ENCODE measurements at regions of chr12 and their contacts with region 1.

Region 1: DNA sequence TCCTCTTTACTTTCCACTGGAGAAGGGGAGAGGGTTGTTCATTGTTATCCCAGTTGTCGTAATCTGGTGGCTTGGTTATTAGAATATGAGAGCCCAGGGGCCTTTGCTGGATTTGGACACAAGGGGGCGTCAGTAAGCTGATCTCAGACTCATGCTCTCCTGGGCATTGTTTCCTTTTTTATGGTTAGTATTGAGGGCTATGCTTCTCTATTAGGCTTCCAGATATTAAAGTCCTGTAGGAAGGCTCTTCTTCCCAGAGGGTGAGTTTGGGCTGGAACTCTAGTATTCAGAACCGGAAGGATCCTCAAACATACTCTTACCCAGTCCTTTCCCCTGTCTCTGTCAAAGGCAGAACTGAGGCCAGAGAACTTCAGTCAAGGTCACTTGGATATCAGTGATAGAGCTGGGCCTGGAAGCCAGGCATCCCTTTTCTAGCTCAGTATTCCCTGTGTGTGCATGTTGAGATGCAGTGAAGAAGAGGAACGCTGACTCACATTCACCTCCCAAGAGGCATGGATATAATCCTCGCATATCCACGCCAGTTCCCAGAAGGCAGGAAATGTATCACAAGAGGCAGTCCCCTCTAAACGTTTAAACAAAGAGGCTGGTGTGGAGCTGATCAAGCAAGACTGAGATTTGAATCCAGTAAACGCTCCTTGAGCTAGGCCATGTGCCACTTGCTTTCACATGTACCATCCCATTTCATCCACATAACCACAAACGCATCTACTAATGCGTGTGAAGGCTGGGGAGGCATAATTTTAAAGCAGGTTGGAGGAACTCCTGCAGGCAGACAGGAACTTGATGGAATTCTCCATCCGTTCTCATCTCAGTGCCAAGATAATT is 41.6 kb downstream of the UBE3B start:
- DNase-seq: peak; percentile 84
- H3K4me3 ChIP-seq: peak overlapping the region in 1 of 3 experiments; percentile 20
- H3K27ac ChIP-seq: peak overlapping the region; percentile 98
- H3K4me1 ChIP-seq: peaks cover 27% of the 10 kb centered on the region
- H3K27me3 ChIP-seq: no peaks in the 10 kb centered on the region
- CTCF ChIP-seq: peak; percentile 84 to 86
- POLR2A ChIP-seq: no peak

Region 2: GRCh38 chr12:109428037-109428629 is 90.9 kb before region 1 on chr12:
- CTCF ChIA-PET with region 1: interaction called, 10 read pairs
- POLR2A ChIA-PET with region 1: no interaction called
- dilution Hi-C with region 1: no loop called
- intact Hi-C with region 1: loop called (anchors 1 kb)
- DNase-seq: peak; percentile 83
- H3K4me3 ChIP-seq: no peak overlapping the region
- H3K27ac ChIP-seq: no peak overlapping the region
- H3K4me1 ChIP-seq: peaks cover 4% of the 10 kb centered on the region
- H3K27me3 ChIP-seq: no peaks in the 10 kb centered on the region
- CTCF ChIP-seq: peak; percentile 95 to 97
- POLR2A ChIP-seq: no peak

Region 3: DNA sequence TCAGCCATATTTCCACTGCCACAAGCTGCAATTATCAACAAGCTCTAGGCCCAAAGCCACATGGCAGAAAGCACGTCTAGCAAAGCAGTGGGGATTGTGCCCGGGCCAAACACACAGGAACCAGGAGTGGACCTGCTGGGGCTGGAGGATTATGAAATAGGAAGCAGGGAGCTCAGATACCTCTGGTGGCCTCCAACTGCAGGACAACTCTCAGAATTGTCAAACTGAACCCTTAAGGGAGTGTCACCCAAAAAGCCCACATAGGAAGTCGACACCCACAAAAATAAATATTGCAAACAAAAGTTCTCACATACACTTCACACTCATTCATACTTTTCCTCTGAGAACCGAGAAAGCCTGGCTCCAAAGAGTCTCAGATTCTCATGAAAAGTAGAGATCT is 68.1 kb before region 1 on chr12:
- CTCF ChIA-PET with region 1: no interaction called
- POLR2A ChIA-PET with region 1: no interaction called
- dilution Hi-C with region 1: no loop called
- intact Hi-C with region 1: no loop called
- DNase-seq: no peak
- H3K4me3 ChIP-seq: no peak overlapping the region
- H3K27ac ChIP-seq: no peak overlapping the region
- H3K4me1 ChIP-seq: peaks cover 14% of the 10 kb centered on the region
- H3K27me3 ChIP-seq: no peaks in the 10 kb centered on the region
- CTCF ChIP-seq: no peak
- POLR2A ChIP-seq: no peak

Region 4: DNA sequence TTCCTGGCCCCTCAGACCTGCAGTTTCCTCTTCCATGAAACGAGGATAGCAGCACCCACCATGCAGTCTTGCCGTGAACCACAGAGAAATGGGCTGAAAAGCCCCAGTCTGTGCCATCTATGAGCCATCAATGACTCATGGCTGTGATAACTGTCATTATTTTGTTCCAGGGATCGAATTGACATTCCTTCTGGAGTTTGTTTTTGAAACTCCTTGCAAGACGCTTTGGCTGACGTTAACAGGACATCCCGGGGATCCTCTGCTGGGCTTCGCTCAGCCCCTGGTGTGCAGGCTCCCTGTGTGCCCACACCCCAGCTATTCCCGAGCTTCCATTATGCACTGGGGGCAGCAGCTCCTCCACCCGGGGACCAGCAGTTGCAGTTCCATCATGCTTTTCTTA is 20.5 kb after region 1 on chr12:
- CTCF ChIA-PET with region 1: interaction called, 10 read pairs
- POLR2A ChIA-PET with region 1: no interaction called
- dilution Hi-C with region 1: no loop called
- intact Hi-C with region 1: no loop called
- DNase-seq: peak; percentile 44
- H3K4me3 ChIP-seq: no peak overlapping the region
- H3K27ac ChIP-seq: no peak overlapping the region
- H3K4me1 ChIP-seq: peaks cover 13% of the 10 kb centered on the region
- H3K27me3 ChIP-seq: no peaks in the 10 kb centered on the region
- CTCF ChIP-seq: no peak
- POLR2A ChIP-seq: no peak

Region 5: GRCh38 chr12:109573029-109573913 is 54.2 kb after region 1 on chr12 and contains the starts of genes MMAB and MVK:
- CTCF ChIA-PET with region 1: interaction called, 37 read pairs
- POLR2A ChIA-PET with region 1: no interaction called
- dilution Hi-C with region 1: no loop called
- intact Hi-C with region 1: loop called (anchors 1 kb)
- DNase-seq: peak; percentile 99
- H3K4me3 ChIP-seq: peak within 1 kb of the TSS; percentile 27 to 83 (median 82)
- H3K27ac ChIP-seq: peak within 1 kb of the TSS; percentile 42
- H3K4me1 ChIP-seq: peaks cover 16% of the 10 kb centered on the region
- H3K27me3 ChIP-seq: no peaks in the 10 kb centered on the region
- CTCF ChIP-seq: no peak
- POLR2A ChIP-seq: peak; percentile 73
- total RNA-seq, gene MMAB: 45.9 and 46.0 TPM in 2 replicates
- total RNA-seq, gene MVK: 40.3 and 42.6 TPM in 2 replicates

Region 6: GRCh38 chr12:109612975-109613502 is 94.0 kb after region 1 on chr12:
- CTCF ChIA-PET with region 1: interaction called, 12 read pairs
- POLR2A ChIA-PET with region 1: no interaction called
- dilution Hi-C with region 1: no loop called
- intact Hi-C with region 1: loop called (anchors 1 kb)
- DNase-seq: no peak
- H3K4me3 ChIP-seq: no peak overlapping the region
- H3K27ac ChIP-seq: no peak overlapping the region
- H3K4me1 ChIP-seq: no peaks in the 10 kb centered on the region
- H3K27me3 ChIP-seq: peaks cover 0 to 14% of the 10 kb centered on the region in 2 experiments
- CTCF ChIP-seq: peak; percentile 30 to 33
- POLR2A ChIP-seq: no peak

Region 7: GRCh38 chr12:109625131-109625559 is 106.1 kb after region 1 on chr12:
- CTCF ChIA-PET with region 1: no interaction called
- POLR2A ChIA-PET with region 1: no interaction called
- dilution Hi-C with region 1: no loop called
- intact Hi-C with region 1: no loop called
- DNase-seq: no peak
- H3K4me3 ChIP-seq: no peak overlapping the region
- H3K27ac ChIP-seq: no peak overlapping the region
- H3K4me1 ChIP-seq: no peaks in the 10 kb centered on the region
- H3K27me3 ChIP-seq: peaks cover 0 to 2% of the 10 kb centered on the region in 2 experiments
- CTCF ChIP-seq: no peak
- POLR2A ChIP-seq: no peak

Region 8: DNA sequence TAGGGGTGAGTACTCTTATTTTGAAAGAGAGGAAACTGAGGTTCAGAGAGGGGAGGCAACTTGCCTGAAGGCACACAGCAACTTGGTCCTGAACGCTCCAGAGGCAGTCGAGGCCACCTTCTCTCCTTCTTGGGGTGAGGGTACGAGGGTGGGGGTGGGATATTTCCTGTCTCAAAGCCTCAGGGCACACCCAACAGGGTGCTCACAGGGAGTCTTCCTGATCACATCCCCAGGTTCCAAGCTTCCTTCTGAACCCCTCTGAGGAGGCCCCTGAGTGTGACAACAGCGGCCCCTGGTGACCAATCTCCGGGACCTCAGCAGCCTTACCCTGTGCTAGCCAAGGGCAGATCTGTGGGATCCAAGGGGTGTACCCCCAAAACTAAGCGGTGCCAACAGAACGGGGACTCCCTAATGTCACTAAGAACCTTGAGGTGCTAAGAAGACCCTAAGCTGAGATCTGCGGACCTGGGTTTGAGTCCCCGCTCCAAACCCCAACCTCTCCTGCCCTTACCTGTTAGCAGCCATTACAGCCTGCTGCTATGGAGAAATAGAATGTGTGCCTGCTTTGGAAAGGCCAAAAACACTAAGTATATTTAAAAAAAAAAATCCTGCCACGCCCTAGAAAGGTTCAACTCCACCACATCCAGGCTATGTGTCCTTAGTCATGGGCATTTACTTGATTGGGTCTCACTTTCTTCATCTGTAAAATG is 256.3 kb after region 1 on chr12:
- CTCF ChIA-PET with region 1: interaction called, 139 read pairs
- POLR2A ChIA-PET with region 1: no interaction called
- dilution Hi-C with region 1: no loop called
- intact Hi-C with region 1: loop called (anchors 1 kb)
- DNase-seq: peak; percentile 62
- H3K4me3 ChIP-seq: no peak overlapping the region
- H3K27ac ChIP-seq: no peak overlapping the region
- H3K4me1 ChIP-seq: no peaks in the 10 kb centered on the region
- H3K27me3 ChIP-seq: no peaks in the 10 kb centered on the region
- CTCF ChIP-seq: peak; percentile 91
- POLR2A ChIP-seq: no peak

Region 9: DNA sequence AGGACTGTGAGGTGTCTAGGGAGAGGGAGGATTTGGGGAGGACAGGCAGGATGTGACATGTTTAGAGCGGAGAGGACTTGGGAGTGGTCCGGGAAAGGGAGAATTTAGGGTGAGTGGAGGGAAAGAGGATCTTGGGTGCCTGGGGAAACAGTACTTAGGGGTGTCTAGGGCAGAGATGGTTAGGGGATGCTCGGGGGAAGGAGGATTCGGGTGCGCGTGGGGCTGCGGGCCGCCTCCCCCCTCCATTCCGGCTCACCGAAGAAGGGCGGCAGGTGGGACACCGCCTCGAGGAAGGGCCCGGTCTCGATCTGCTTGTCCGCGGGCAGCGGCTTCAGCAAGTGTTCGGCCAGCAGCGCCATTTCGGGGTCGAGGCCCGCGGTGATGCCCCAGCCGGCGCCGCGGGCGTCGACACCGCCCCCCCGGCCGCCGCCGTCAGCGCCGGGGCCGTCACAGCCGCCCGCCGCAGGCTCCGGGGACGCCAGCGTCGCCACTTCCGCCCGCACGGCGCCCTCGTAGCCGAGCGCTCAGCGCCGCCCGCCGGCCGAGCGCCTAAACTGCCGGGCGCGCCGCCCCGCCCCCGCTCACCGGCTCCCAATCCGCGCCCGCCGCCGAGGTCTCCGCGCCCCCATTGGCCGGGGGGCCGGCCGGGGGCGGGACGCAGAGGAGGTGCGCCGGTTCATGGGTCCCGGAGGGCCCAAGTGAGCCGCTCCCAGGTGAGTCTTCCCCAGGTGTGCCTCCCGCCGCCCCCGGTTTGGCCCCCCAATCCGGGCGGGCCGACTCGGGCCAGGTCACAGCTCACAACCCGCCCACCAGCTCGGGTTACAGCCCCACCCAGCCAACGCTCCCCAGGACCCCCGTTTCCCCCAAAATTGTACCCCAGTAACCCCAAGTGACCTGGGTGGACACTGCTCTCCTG is 361.2 kb after region 1 on chr12 and contains the start of gene GLTP:
- CTCF ChIA-PET with region 1: no interaction called
- POLR2A ChIA-PET with region 1: no interaction called
- dilution Hi-C with region 1: no loop called
- intact Hi-C with region 1: loop called (anchors 2 kb)
- DNase-seq: peak; percentile 80
- H3K4me3 ChIP-seq: peak within 1 kb of the TSS; percentile 50 to 79 (median 76)
- H3K27ac ChIP-seq: peak within 1 kb of the TSS; percentile 40
- H3K4me1 ChIP-seq: peaks cover 17% of the 10 kb centered on the region
- H3K27me3 ChIP-seq: no peaks in the 10 kb centered on the region
- CTCF ChIP-seq: peak; percentile 38 to 68
- POLR2A ChIP-seq: peak; percentile 77
- total RNA-seq, gene GLTP: 46.6 and 48.0 TPM in 2 replicates

Measured in endothelial cell of umbilical vein (primary cell).